ENCODE measurements at regions of chr22 and their contacts with region 1.

Region 1: DNA sequence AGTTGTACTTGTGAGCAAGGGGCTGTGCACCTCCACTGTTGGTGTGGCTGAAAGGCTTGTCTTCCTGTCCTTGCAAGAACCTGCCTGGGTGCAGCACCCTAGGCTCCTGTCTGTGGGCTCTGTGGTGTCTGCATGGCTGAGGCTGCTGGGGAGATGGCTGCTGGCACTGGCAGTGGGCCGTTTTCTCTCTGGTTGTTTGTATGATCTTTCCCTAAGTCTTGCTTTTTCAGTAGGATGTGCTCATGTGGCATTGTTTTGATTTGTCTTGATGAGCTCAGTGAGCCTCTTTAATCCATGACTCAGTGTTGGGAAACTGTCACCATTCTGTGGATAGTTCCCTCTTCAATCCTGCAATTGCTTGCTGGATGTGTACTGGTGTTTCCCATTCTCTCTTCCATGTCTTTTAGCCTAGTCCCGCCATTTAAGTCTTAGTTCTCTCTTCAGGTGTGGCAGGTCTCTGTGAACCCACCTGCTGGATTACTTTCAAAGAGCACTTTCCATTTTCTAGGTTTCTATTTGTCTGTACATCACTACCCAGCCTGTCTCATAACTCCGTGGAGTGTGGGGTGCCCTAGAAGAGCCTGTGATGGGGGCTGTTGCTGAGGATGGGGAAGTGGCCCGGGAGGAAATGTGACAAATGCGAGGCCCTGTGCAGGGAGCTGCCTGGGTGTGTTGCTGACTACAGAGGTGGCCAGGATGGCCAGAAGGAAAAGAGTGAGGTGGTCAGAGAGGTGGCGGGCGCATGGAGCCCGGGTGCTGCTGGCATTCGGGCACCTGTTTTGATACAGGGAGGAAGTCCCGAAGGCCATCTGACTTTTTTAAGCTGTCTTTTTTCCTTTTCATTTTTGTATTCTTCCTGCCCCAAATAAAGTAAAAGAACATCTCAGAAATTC is 10.6 kb downstream of the DGCR8 start:
- DNase-seq: no peak
- ATAC-seq: no peak
- H3K4me3 ChIP-seq: no peak overlapping the region
- H3K27ac ChIP-seq: no peak overlapping the region
- H3K4me1 ChIP-seq: peaks cover 0 to 12% (median 1%) of the 10 kb centered on the region in 9 donors
- H3K27me3 ChIP-seq: no peaks in the 10 kb centered on the region
- CTCF ChIP-seq: no peak

Region 2: DNA sequence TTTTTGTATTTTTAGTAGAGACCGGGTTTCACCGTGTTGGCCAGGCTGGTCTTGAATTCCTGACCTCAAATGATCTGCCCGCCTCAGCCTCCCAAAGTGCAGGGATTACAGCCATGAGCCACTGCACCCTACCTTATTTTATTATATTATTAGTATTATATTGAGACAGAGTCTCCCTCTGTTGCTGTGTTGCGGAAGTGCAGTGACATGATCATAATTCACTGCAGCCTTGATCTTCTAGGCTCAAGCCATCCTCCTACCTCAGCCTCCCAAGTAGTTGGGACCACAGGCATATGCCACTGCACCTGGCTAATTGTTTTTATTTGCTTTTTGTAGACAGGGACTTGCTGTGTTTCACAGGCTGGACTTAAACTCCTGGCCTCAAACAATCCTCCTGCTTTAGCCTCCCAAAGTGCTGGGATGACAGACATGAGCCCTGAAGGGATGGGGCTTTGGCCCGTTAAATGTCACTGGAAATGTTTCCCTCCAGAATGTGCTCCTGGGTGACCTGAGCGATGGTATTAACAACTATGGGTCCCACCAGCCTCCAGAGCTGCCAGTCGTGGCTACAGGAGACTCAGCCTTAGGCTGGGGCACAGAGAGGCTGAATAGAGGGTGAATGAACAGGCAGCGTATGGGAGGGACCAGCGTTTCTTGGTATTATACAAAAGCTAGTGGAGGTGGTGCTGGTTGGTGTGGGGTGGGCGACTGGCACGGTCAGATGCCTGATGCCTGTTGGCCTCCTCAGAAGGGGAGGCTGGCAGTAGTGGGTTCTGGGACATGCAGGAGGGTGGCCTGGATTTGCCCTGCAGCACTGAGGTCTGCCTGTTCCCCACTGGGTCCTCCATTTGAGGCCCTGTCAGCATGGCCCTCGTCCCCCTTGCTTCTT is 62.4 kb before region 1 on chr22:
- intact Hi-C with region 1: loop called in 2 of 10 experiments (anchors 5 kb)
- DNase-seq: no peak
- ATAC-seq: no peak
- H3K4me3 ChIP-seq: no peak overlapping the region
- H3K27ac ChIP-seq: peak overlapping the region in 6 of 10 donors; percentile 37 to 71 (median 48)
- H3K4me1 ChIP-seq: peaks cover 46 to 96% (median 72%) of the 10 kb centered on the region in 9 donors
- H3K27me3 ChIP-seq: no peaks in the 10 kb centered on the region
- CTCF ChIP-seq: peak in 3 of 9 donors; percentile 23 to 24 (median 24)